T-cell (primary cell): ENCODE measurements at regions of chr10 and their contacts with region 1.

Region 1: GRCh38 chr10:51653025-51653424 is 46.4 kb downstream of the CSTF2T start:
- DNase-seq: no peak
- ATAC-seq: no peak
- H3K4me3 ChIP-seq: no peak overlapping the region
- H3K4me3 Mint-ChIP-seq: no peak overlapping the region
- H3K27ac ChIP-seq: no peak overlapping the region
- H3K27ac Mint-ChIP-seq: no peak overlapping the region
- H3K4me1 ChIP-seq: no peaks in the 10 kb centered on the region
- H3K4me1 Mint-ChIP-seq: no peaks in the 10 kb centered on the region
- H3K27me3 ChIP-seq: no peaks in the 10 kb centered on the region
- H3K27me3 Mint-ChIP-seq: peaks cover 12 to 18% of the 10 kb centered on the region in 2 donors

Region 2: GRCh38 chr10:51487576-51487975 is 165.4 kb before region 1 on chr10:
- CTCF ChIA-PET with region 1: no interaction called
- POLR2A ChIA-PET with region 1: interaction called in 1 of 2 experiments, 16 read pairs
- DNase-seq: no peak
- ATAC-seq: no peak
- H3K4me3 ChIP-seq: no peak overlapping the region
- H3K4me3 Mint-ChIP-seq: no peak overlapping the region
- H3K27ac ChIP-seq: no peak overlapping the region
- H3K27ac Mint-ChIP-seq: no peak overlapping the region
- H3K4me1 ChIP-seq: no peaks in the 10 kb centered on the region
- H3K4me1 Mint-ChIP-seq: no peaks in the 10 kb centered on the region
- H3K27me3 ChIP-seq: no peaks in the 10 kb centered on the region
- H3K27me3 Mint-ChIP-seq: no peaks in the 10 kb centered on the region

Region 3: GRCh38 chr10:51585742-51586141 is 67.3 kb before region 1 on chr10:
- CTCF ChIA-PET with region 1: no interaction called
- POLR2A ChIA-PET with region 1: no interaction called
- DNase-seq: no peak
- ATAC-seq: no peak
- H3K4me3 ChIP-seq: no peak overlapping the region
- H3K4me3 Mint-ChIP-seq: no peak overlapping the region
- H3K27ac ChIP-seq: no peak overlapping the region
- H3K27ac Mint-ChIP-seq: no peak overlapping the region
- H3K4me1 ChIP-seq: no peaks in the 10 kb centered on the region
- H3K4me1 Mint-ChIP-seq: no peaks in the 10 kb centered on the region
- H3K27me3 ChIP-seq: no peaks in the 10 kb centered on the region
- H3K27me3 Mint-ChIP-seq: peaks cover 0 to 3% of the 10 kb centered on the region in 2 donors